Right ventricle myocardium superior (tissue), 1 donor: ENCODE measurements at regions of chr16 and their contacts with region 1.

Region 1: DNA sequence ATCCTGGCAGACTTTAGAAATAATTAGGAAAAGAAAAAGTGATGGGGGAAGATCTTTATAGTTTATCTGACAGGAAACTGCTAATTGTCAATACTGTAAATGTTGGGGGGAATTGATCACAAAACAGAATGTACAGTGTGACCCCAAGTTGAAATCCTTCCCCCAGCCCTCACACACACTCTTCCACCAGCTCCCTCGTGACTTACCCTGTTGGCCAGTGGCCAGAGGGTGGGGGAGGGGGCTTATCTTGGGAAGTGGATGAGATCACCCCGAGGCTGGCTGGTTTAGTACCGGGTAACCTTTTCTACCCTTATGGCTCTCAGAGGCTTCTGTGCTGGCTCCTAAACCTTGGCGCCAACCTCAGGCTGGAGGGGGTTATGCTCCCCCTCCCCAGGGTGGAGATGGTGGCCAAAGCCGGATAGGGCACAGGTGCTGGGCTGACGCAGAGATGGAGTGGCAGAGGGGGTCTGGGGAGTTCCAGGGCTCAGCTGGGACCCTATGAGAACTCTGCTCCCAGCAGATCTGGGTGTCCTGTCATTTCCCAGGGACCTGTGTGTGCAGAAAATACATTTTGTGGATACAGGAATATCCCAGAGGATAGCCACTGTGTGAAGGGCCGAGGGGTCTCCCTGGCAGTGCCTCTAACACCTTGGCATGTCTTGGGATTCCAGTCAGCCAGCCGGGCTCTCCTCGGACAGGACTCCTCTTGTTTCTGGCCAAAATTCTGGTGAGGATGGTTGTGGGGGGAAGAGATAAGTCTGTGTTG is 18.6 kb downstream of the CDH16 start:
- DNase-seq: peak; percentile 83
- ATAC-seq: peak; percentile 0

Region 2: GRCh38 chr16:66935322-66936260 is 35.5 kb after region 1 on chr16 and contains the start of gene CES2:
- intact Hi-C with region 1: loop called (anchors 5 kb)
- DNase-seq: peak; percentile 78
- ATAC-seq: peak; percentile 77
- total RNA-seq, gene CES2: 114 TPM